Transverse colon (tissue), 4 donors: ENCODE measurements at regions of chr2 and their contacts with region 1.

Region 1: DNA sequence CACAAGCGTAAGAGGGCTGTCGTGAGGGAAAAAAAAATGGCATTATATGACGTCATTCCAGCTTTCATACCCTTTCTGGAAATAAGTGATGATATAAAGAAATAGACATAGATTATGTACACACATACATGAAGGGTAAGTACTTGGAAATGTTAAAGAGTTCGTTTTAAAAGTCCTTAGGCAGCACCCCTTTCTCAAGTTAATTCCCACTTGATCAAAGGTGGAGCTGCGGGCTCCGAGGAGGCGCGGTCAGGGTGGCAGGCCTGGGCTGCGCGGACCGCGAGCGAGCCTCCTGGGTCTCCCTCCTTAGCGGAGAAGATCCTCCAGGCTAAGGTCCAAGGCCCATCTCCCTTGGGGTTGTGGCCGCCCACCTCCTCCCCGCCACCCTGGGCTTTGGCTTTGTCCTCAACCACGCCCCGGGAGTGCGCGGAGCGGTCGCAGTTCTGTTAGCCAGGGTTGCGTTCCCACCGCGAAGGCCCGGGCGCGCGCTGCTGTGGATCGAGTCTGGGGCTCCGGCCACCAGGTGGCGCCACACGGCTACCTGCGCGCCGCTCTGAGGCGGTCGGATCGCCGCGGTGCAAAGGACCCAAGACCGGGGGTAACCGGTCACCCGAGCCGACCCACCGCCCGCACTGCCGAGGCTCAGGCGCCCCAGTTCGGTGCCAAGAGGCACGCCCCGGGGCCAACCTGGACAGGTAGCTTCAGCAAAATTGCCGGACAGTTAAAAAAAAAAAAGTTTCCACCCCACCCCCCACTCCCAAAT is 66.8 kb downstream of the HNRNPLL start:
- DNase-seq: peak; percentile 86
- H3K4me3 ChIP-seq: peak overlapping the region; percentile 34 to 60 (median 48)
- H3K27ac ChIP-seq: peak overlapping the region; percentile 58 to 80 (median 68)
- H3K4me1 ChIP-seq: peaks cover 5 to 27% (median 20%) of the 10 kb centered on the region in 4 donors
- H3K27me3 ChIP-seq: no peaks in the 10 kb centered on the region
- CTCF ChIP-seq: peak; percentile 85 to 97 (median 93)
- EP300 ChIP-seq: no peak
- POLR2A ChIP-seq: no peak

Region 2: GRCh38 chr2:37890893-37891495 is 644.9 kb before region 1 on chr2:
- in situ Hi-C with region 1: no loop called
- intact Hi-C with region 1: no loop called
- DNase-seq: peak; percentile 80
- H3K4me3 ChIP-seq: no peak overlapping the region
- H3K27ac ChIP-seq: no peak overlapping the region
- H3K4me1 ChIP-seq: peaks cover 0 to 14% (median 2%) of the 10 kb centered on the region in 4 donors
- H3K27me3 ChIP-seq: no peaks in the 10 kb centered on the region
- CTCF ChIP-seq: peak; percentile 66 to 81 (median 75)
- EP300 ChIP-seq: no peak
- POLR2A ChIP-seq: no peak

Region 3: DNA sequence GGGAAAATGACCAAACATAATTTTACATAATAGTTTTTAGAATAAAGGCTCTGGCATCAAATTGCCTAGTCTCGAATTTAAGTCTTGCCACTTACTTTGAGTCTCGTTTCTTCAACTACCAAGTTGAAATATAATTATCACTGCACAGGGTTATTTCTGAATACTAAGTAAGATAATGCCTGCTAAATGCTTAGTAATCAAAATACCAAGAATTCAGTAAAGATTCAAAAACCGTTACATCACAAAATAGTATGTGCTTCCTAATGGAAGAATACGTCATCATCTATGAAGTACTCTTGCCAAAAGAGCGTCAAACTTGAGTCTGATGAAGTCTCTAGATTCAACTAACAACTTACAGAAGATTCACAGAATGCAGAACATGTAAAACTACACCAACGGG is 199.3 kb before region 1 on chr2:
- in situ Hi-C with region 1: no loop called
- intact Hi-C with region 1: no loop called
- DNase-seq: no peak
- H3K4me3 ChIP-seq: no peak overlapping the region
- H3K27ac ChIP-seq: no peak overlapping the region
- H3K4me1 ChIP-seq: peaks cover 0 to 11% (median 2%) of the 10 kb centered on the region in 4 donors
- H3K27me3 ChIP-seq: no peaks in the 10 kb centered on the region
- CTCF ChIP-seq: no peak
- EP300 ChIP-seq: no peak
- POLR2A ChIP-seq: no peak

Region 4: DNA sequence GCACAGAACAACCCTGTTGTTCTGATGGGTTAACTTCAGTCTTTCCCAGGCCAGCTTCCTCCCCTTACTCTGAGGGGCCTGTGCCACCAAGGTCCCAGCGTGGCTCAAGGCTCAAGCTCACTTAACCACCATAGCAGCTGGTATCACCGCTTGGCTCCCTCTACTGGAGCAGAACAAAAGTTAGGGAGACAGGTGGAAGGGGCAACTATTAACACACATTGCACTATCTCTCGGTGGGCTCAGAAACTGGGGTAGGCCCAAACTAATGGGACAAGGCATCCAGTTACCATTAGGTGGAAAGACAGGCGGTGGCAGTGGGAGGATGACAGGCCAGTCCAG is 70.2 kb before region 1 on chr2:
- in situ Hi-C with region 1: no loop called
- intact Hi-C with region 1: loop called (anchors 5 kb)
- DNase-seq: peak; percentile 35
- H3K4me3 ChIP-seq: no peak overlapping the region
- H3K27ac ChIP-seq: peak overlapping the region; percentile 61 to 81 (median 77)
- H3K4me1 ChIP-seq: peaks cover 5 to 57% (median 18%) of the 10 kb centered on the region in 4 donors
- H3K27me3 ChIP-seq: no peaks in the 10 kb centered on the region
- CTCF ChIP-seq: peak; percentile 16 to 48 (median 42)
- EP300 ChIP-seq: no peak
- POLR2A ChIP-seq: no peak

Region 5: GRCh38 chr2:38740851-38741731 is 205.2 kb after region 1 on chr2:
- in situ Hi-C with region 1: no loop called
- intact Hi-C with region 1: loop called (anchors 10 kb)
- DNase-seq: no peak
- H3K4me3 ChIP-seq: peak overlapping the region in 1 of 4 donors; percentile 16
- H3K27ac ChIP-seq: peak overlapping the region; percentile 79 to 83 (median 80)
- H3K4me1 ChIP-seq: peaks cover 5 to 71% (median 37%) of the 10 kb centered on the region in 4 donors
- H3K27me3 ChIP-seq: no peaks in the 10 kb centered on the region
- CTCF ChIP-seq: peak; percentile 63 to 94 (median 82)
- EP300 ChIP-seq: no peak
- POLR2A ChIP-seq: no peak